ENCODE measurements at regions of chr11 and their contacts with region 1.

Region 1: GRCh38 chr11:124673333-124674167 is at the starts of genes SIAE and SPA17:
- DNase-seq: peak; percentile 94
- H3K4me3 ChIP-seq: peak within 1 kb of the TSS; percentile 54 to 55
- H3K27ac ChIP-seq: peak within 1 kb of the TSS; percentile 64 to 72
- H3K4me1 ChIP-seq: peaks cover 3% of the 10 kb centered on the region
- H3K27me3 ChIP-seq: no peaks in the 10 kb centered on the region
- CTCF ChIP-seq: peak in 1 of 4 experiments; percentile 11
- POLR2A ChIP-seq: peak; percentile 57
- total RNA-seq, gene SIAE: 20.4 to 30.1 TPM
- total RNA-seq, gene SPA17: 14.7 to 20.8 TPM

Region 2: DNA sequence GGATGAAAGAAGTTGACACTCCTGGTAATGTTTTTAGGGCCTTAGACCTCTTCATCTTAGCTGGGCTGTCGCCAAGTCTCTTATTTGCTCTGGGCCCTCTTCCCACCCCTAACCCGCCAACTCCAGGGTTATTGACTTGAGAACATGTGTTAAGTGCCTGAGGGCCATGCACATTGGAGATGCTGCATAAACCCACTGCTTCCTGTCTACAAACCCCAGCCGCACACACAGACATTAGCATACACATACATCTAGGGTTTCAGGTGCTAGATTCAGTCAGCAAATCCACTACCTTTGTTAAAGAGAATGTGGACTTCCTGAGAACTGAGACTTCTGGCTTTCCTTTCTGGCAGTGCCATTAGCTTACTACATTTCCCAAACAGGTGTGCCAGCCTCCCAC is 61.5 kb before region 1 on chr11:
- intact Hi-C with region 1: no loop called
- DNase-seq: no peak
- H3K4me3 ChIP-seq: no peak overlapping the region
- H3K27ac ChIP-seq: no peak overlapping the region
- H3K4me1 ChIP-seq: no peaks in the 10 kb centered on the region
- H3K27me3 ChIP-seq: no peaks in the 10 kb centered on the region
- CTCF ChIP-seq: no peak
- POLR2A ChIP-seq: no peak

Region 3: DNA sequence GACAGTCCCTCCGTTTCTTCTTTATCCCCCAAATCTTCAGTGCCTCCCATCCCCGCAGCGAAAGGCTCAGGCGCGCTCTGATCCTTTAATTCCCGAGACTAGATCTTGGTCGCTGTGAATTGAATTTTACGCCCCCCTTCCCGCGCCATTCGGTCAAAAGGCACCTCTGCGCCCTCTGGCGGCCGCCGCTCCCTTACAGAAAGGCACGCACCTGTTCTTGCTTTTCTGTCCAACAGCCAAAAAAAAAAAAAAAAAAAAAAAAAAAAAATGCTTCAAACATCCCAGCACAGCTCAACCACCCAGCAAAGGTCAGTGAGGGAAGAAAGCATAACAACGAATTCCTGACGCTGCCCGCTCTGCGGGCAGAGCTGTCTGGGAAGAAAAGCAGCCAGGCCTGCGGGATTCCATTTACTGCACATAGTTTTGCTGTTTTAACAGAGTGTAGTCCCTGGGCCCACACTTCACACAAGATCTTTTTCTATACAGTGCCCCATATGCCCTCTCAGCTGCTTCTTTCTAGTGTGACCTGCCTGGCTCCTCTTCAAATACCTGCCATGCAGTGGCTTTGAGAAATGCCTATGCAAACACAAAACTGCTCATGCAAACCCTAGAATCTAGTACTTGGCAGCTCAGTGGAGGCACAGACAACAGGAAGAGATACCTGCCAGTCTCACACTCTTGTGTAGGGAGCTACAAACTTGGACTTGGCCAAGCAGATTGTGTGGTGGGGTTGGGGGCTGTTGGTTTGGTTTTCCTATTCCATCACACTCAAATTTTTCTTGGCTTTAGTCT is 89.8 kb after region 1 on chr11:
- intact Hi-C with region 1: loop called (anchors 2 kb)
- DNase-seq: peak; percentile 84
- H3K4me3 ChIP-seq: peak overlapping the region; percentile 16 to 35
- H3K27ac ChIP-seq: no peak overlapping the region
- H3K4me1 ChIP-seq: peaks cover 13% of the 10 kb centered on the region
- H3K27me3 ChIP-seq: peaks cover 19% of the 10 kb centered on the region
- CTCF ChIP-seq: peak; percentile 46 to 73 (median 66)
- POLR2A ChIP-seq: no peak

Region 4: GRCh38 chr11:124837491-124837856 is 163.9 kb after region 1 on chr11:
- intact Hi-C with region 1: loop called (anchors 2 kb)
- DNase-seq: no peak
- H3K4me3 ChIP-seq: no peak overlapping the region
- H3K27ac ChIP-seq: no peak overlapping the region
- H3K4me1 ChIP-seq: peaks cover 8% of the 10 kb centered on the region
- H3K27me3 ChIP-seq: peaks cover 13% of the 10 kb centered on the region
- CTCF ChIP-seq: no peak
- POLR2A ChIP-seq: no peak